ENCODE measurements at regions of chr9 and their contacts with region 1.

Region 1: GRCh38 chr9:87120610-87121009 is 173.3 kb upstream of the GAS1 start:
- DNase-seq: no peak
- H3K4me3 ChIP-seq: no peak overlapping the region
- H3K27ac ChIP-seq: peak overlapping the region in 3 of 4 donors; percentile 76 to 83 (median 83)
- H3K4me1 ChIP-seq: peaks cover 0 to 69% (median 63%) of the 10 kb centered on the region in 4 donors
- H3K27me3 ChIP-seq: no peaks in the 10 kb centered on the region
- CTCF ChIP-seq: no peak
- EP300 ChIP-seq: no peak
- POLR2A ChIP-seq: no peak

Region 2: GRCh38 chr9:87035879-87036278 is 84.7 kb before region 1 on chr9:
- intact Hi-C with region 1: loop called (anchors 2 kb)
- DNase-seq: no peak
- H3K4me3 ChIP-seq: no peak overlapping the region
- H3K27ac ChIP-seq: peak overlapping the region; percentile 77 to 85 (median 82)
- H3K4me1 ChIP-seq: peaks cover 0 to 58% (median 32%) of the 10 kb centered on the region in 4 donors
- H3K27me3 ChIP-seq: no peaks in the 10 kb centered on the region
- CTCF ChIP-seq: no peak
- EP300 ChIP-seq: no peak
- POLR2A ChIP-seq: no peak

Region 3: DNA sequence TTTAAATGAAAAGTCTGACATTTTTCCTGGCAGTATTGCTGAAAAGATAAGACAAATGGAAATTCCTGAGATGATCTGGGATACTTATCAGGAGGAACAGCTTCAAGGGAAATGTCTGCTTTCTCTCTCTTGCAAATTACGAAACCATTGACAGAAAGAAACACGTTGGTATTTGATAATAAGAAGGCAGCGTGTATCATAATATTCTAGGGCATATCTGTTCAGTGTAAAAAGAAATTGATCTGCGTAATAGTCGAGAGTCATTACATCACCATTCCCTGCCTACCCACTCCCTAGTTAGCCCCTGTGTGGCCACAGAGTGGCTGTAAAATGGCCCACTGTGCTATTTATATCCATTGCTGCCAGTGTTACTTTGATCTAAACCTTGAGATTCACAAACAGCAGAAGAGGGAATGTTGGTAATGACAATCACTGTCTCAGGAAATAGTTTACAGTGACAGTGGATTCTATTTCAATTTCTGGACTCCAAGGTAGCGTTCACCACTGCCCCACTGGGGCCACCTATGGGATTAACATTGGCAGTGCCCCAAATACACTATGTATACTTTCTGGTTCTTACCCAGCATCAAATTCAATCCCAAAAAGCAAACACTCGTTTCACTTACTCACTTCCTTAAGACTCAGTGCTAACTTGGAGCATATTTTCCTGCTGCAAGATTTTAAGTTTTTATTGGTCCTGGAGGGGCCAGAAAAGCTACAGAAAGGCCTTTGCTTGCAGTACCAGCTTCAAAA is 39.9 kb before region 1 on chr9:
- intact Hi-C with region 1: no loop called
- DNase-seq: no peak
- H3K4me3 ChIP-seq: no peak overlapping the region
- H3K27ac ChIP-seq: peak overlapping the region in 3 of 4 donors; percentile 65 to 76 (median 69)
- H3K4me1 ChIP-seq: peaks cover 0 to 31% (median 20%) of the 10 kb centered on the region in 4 donors
- H3K27me3 ChIP-seq: no peaks in the 10 kb centered on the region
- CTCF ChIP-seq: no peak
- EP300 ChIP-seq: peak in 1 of 4 donors; percentile 14
- POLR2A ChIP-seq: no peak

Measured in sigmoid colon (tissue), 7 donors.